ENCODE measurements at regions of chr16 and their contacts with region 1.

Region 1: GRCh38 chr16:8936421-8936820 is 27.3 kb downstream of the USP7 start:
- DNase-seq: peak; percentile 92
- ATAC-seq: peak; percentile 100
- H3K4me3 Mint-ChIP-seq: no peak overlapping the region
- H3K27ac Mint-ChIP-seq: peak overlapping the region; percentile 78
- H3K4me1 Mint-ChIP-seq: peaks cover 81% of the 10 kb centered on the region
- H3K27me3 Mint-ChIP-seq: no peaks in the 10 kb centered on the region

Region 2: DNA sequence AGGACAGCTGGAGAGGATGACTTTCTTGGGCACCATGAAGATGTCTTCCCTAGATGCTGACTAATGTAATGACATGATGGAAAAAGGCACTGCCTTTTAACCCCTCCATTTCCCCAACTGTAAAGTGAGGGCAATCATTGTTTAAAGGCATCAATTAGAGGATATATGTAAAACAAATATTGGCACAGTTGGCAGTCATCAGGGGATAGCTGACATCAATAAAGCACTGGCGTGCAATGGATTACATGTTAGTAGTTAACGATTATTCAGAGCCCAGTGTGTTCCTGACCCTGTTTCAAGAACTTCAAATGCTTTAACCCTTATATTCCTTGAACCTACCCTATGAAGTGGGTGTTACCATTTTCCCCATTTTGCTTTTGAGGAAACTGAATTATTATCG is 446.8 kb before region 1 on chr16:
- CTCF ChIA-PET with region 1: no interaction called
- POLR2A ChIA-PET with region 1: no interaction called
- intact Hi-C with region 1: no loop called
- DNase-seq: no peak
- ATAC-seq: no peak
- H3K4me3 Mint-ChIP-seq: no peak overlapping the region
- H3K27ac Mint-ChIP-seq: no peak overlapping the region
- H3K4me1 Mint-ChIP-seq: no peaks in the 10 kb centered on the region
- H3K27me3 Mint-ChIP-seq: no peaks in the 10 kb centered on the region

Region 3: DNA sequence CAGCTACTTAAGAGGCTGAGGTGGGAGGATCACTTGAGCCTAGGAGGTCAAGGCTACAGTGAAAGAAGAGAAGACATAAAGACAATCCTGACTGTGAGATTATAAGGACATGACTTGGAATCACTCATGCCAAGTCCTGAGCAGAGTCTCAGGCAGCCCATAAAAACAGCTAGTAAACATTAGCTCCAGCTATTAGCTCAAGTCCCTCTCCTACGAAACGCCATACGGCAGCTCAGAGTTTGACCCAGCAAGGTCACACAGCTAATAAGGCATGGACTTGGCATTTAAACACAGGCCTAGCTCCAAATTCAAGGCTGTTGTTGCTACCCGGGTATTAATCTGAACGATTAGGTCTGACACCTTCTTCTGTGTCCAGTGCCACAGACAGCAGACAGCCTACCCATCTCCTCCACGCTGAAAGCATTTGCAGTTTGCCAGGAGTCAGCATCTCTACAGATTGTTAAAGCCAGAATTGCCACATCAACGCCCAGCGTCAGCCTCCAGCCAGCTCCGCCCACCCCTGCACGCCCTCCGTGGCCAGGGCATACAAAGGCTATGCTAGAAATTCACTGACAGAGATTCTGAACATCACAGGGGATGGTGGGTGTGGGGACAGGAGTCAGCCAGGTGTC is 336.2 kb before region 1 on chr16:
- CTCF ChIA-PET with region 1: no interaction called
- POLR2A ChIA-PET with region 1: no interaction called
- intact Hi-C with region 1: no loop called
- DNase-seq: no peak
- ATAC-seq: no peak
- H3K4me3 Mint-ChIP-seq: no peak overlapping the region
- H3K27ac Mint-ChIP-seq: no peak overlapping the region
- H3K4me1 Mint-ChIP-seq: no peaks in the 10 kb centered on the region
- H3K27me3 Mint-ChIP-seq: peaks cover 3% of the 10 kb centered on the region

Region 4: GRCh38 chr16:8878521-8878911 is 57.9 kb before region 1 on chr16:
- CTCF ChIA-PET with region 1: interaction called, 18 read pairs
- POLR2A ChIA-PET with region 1: interaction called, 5 read pairs
- intact Hi-C with region 1: no loop called
- DNase-seq: no peak
- ATAC-seq: no peak
- H3K4me3 Mint-ChIP-seq: no peak overlapping the region
- H3K27ac Mint-ChIP-seq: no peak overlapping the region
- H3K4me1 Mint-ChIP-seq: peaks cover 5% of the 10 kb centered on the region
- H3K27me3 Mint-ChIP-seq: no peaks in the 10 kb centered on the region

Region 5: GRCh38 chr16:8910811-8911210 is 25.6 kb before region 1 on chr16:
- CTCF ChIA-PET with region 1: interaction called, 19 read pairs
- POLR2A ChIA-PET with region 1: no interaction called
- intact Hi-C with region 1: no loop called
- DNase-seq: no peak
- ATAC-seq: no peak
- H3K4me3 Mint-ChIP-seq: no peak overlapping the region
- H3K27ac Mint-ChIP-seq: peak overlapping the region; percentile 58
- H3K4me1 Mint-ChIP-seq: peaks cover 27% of the 10 kb centered on the region
- H3K27me3 Mint-ChIP-seq: no peaks in the 10 kb centered on the region

Region 6: DNA sequence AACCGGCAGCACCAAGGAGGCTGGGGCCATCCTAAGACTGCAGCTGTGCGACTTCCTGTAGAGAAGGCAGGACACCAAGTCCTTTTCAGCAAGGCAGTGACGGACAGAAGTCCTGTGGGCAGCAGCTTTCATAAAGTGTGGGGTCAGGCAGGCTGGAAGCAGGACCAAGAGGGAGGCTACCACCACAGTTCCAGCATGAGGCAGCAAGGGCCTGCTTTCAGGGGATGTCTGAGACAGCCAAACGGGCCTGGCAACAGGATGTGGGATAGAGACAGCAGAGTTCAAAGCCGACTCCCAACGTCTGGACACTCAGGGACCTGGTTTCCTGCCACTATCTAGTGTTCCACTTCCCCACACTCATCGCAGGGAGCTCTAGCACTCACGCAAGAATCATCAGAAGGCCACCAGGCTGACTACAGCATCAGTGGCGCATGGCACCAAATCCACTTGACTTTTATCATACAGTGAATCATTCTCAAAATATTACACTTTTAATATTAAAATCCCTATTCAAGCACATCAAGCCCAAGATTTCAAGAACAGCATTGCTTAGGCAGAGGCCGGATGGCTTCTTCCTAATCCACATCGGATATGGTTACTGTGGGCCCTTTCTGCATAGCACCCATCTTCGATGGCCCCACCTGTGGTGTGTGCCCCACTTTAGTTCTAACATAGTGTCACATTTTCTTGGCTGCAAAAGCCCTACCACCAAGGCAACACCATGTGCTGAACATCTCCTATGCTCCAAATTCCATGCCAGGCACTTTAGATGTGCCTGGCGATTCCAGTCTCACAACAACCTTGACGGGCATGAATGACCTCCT is 22.1 kb after region 1 on chr16:
- CTCF ChIA-PET with region 1: interaction called, 8 read pairs
- POLR2A ChIA-PET with region 1: interaction called, 4 read pairs
- intact Hi-C with region 1: loop called (anchors 2 kb)
- DNase-seq: peak; percentile 45
- ATAC-seq: peak; percentile 19
- H3K4me3 Mint-ChIP-seq: peak overlapping the region; percentile 95
- H3K27ac Mint-ChIP-seq: peak overlapping the region; percentile 94
- H3K4me1 Mint-ChIP-seq: peaks cover 81% of the 10 kb centered on the region
- H3K27me3 Mint-ChIP-seq: no peaks in the 10 kb centered on the region

Region 7: DNA sequence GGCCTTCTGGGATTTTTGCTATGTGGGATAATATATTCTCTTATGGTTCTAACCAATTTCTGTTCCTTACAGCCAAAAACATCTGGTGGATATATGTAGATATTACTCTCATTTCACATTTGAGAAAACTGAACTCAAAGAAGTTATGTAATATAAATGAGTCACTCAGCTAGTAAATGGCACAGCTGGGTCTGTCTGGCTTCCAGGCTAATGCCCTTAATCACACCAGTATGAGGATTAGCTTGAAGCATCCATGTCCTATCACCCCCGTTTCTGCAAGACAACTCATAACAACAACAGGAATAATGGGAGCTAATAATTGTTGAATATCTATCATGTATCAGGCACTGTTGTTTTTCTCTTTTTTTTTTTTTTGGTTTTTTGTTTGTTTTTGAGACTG is 61.7 kb after region 1 on chr16:
- CTCF ChIA-PET with region 1: no interaction called
- POLR2A ChIA-PET with region 1: no interaction called
- intact Hi-C with region 1: no loop called
- DNase-seq: no peak
- ATAC-seq: no peak
- H3K4me3 Mint-ChIP-seq: no peak overlapping the region
- H3K27ac Mint-ChIP-seq: no peak overlapping the region
- H3K4me1 Mint-ChIP-seq: no peaks in the 10 kb centered on the region
- H3K27me3 Mint-ChIP-seq: no peaks in the 10 kb centered on the region